Right ventricle myocardium inferior (tissue), 1 donor: ENCODE measurements at regions of chr19 and their contacts with region 1.

Region 1: DNA sequence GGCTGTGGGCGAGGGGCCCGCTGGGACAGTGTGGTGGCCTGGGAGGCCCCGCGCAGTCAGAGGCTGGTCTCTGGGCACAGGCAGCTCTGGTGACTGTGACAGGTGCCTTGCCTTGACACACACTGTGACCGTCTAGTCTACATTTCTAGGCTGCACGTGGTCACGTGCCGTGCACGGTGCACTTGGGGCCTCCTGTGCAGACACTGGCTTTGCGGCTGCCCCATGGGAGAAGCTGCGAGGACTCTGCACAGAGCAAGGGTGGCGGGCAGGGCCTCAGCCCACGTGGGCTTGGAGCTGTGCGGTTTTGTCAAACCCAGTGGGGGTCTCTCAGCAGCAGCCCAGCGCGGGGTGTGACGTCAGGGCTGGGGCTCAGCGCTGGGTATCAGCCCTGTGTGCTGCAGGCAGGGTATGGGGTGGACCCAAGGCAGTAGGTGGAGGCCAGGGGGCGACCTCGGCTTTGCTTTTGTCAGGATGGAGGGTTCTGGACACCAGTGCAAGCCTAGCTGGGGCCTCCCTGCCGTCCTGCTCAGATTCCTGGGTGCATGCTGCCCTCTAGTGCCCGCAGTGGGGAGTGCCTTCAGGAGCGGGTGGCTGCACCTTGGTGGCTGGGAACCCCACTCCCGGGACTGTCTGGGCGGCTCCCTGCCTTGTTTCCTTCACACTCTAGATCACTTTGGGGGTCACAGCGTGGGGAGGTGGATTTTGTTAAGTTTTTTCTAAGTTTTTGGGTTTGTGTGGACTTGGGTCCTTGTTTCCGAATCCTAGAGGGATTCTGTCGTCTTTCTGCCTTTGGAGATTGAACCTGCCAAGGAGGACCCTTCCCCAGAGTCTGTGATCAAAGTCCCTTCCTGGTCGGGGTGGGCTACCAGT is 62.6 kb downstream of the KDM4B start:
- DNase-seq: peak; percentile 90
- ATAC-seq: peak; percentile 83

Region 2: GRCh38 chr19:4811328-4812131 is 219.9 kb before region 1 on chr19:
- intact Hi-C with region 1: loop called (anchors 1 kb)
- DNase-seq: peak; percentile 91
- ATAC-seq: peak; percentile 45

Region 3: GRCh38 chr19:4867534-4868285 is 163.8 kb before region 1 on chr19 and contains the start of gene PLIN3:
- intact Hi-C with region 1: loop called (anchors 1 kb)
- DNase-seq: peak; percentile 99
- ATAC-seq: peak; percentile 98
- total RNA-seq, gene PLIN3: 34.0 TPM

Region 4: GRCh38 chr19:4968462-4969291 is 62.8 kb before region 1 on chr19 and contains the start of gene KDM4B:
- intact Hi-C with region 1: loop called (anchors 2 kb)
- DNase-seq: peak; percentile 100
- ATAC-seq: peak; percentile 97
- total RNA-seq, gene KDM4B: 38.6 TPM

Region 5: GRCh38 chr19:4988770-4989251 is 42.7 kb before region 1 on chr19:
- intact Hi-C with region 1: loop called (anchors 5 kb)
- DNase-seq: no peak
- ATAC-seq: peak; percentile 78